Heart left ventricle (tissue), 16 donors: ENCODE measurements at regions of chr15 and their contacts with region 1.

Region 1: GRCh38 chr15:43879386-43880355 is 52.9 kb downstream of the WDR76 start:
- DNase-seq: peak in 4 of 5 donors; percentile 60 to 82 (median 75)
- ATAC-seq: peak; percentile 82 to 90 (median 84)
- H3K4me3 ChIP-seq: peak overlapping the region; percentile 25 to 66 (median 58)
- H3K27ac ChIP-seq: peak overlapping the region; percentile 71 to 98 (median 91)
- H3K4me1 ChIP-seq: peaks cover 0 to 34% (median 8%) of the 10 kb centered on the region in 12 donors
- H3K27me3 ChIP-seq: no peaks in the 10 kb centered on the region
- CTCF ChIP-seq: no peak
- POLR2A ChIP-seq: peak; percentile 37 to 41

Region 2: DNA sequence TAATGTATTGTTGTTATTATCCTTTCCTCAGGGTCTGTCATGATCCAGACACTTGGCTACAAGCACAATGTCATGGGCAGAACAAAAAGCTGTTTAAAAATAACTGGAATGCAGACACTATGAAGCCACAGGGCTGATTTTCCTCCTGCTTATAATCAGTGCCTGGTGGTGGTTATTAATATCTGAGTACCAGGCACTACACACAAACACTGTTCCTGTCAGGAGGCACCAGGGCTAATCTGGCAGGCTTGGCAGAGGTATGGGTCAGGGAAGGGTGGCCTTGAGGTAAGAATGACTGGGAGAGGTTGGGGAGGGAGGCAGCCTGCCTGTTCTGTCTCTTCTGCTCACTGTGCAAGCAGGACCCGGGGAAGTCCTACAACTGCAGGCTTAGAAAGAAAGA is 14.3 kb after region 1 on chr15:
- intact Hi-C with region 1: loop called in 3 of 10 experiments (anchors 1 to 2 kb)
- DNase-seq: peak in 4 of 5 donors; percentile 75 to 87 (median 83)
- ATAC-seq: peak; percentile 96 to 98 (median 96)
- H3K4me3 ChIP-seq: peak overlapping the region in 4 of 12 donors; percentile 3 to 27 (median 14)
- H3K27ac ChIP-seq: peak overlapping the region; percentile 66 to 96 (median 88)
- H3K4me1 ChIP-seq: peaks cover 0 to 60% (median 20%) of the 10 kb centered on the region in 12 donors
- H3K27me3 ChIP-seq: no peaks in the 10 kb centered on the region
- CTCF ChIP-seq: no peak
- POLR2A ChIP-seq: peak in 1 of 2 donors; percentile 31